ENCODE measurements at regions of chr14 and their contacts with region 1.

Region 1: DNA sequence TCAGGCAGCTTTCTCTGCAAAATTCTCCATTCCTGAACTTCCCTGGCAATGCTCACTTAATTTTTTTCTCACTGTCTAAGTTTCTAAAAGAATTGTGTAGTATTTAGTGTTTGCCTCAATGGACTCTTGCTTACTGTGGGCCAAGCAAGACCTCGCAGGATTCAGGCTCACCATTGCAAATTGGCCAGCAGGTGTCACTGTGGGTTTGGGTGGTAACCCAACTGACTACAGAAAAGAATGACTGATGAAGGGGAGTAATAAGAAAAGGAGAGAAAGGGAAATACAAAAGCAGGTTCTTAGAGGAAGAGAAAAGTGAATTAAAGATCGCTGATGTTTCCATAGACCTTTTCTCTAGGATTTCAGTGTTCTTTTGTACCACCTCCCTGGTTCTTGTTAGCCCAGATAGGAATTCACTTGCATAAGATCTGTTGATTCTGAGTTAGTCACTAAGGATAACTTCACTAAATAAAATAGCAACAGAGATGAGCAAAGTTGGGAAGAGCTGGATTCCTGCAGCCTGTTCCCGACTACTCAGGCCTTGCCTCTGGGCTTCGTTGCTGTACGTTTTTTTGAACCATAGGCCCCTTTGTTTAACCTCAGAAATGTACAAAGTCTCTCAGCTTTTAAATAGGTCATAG is 386.5 kb upstream of the DDHD1 start:
- DNase-seq: peak; percentile 67 to 78 (median 72)
- ATAC-seq: peak; percentile 67 to 92 (median 81)
- H3K4me3 ChIP-seq: no peak overlapping the region
- H3K27ac ChIP-seq: peak overlapping the region in 5 of 12 donors; percentile 15 to 56 (median 34)
- H3K4me1 ChIP-seq: peaks cover 0 to 42% (median 7%) of the 10 kb centered on the region in 12 donors
- H3K27me3 ChIP-seq: no peaks in the 10 kb centered on the region
- CTCF ChIP-seq: peak; percentile 75 to 95 (median 89)
- POLR2A ChIP-seq: no peak

Region 2: GRCh38 chr14:53432378-53432802 is 107.2 kb before region 1 on chr14:
- intact Hi-C with region 1: loop called in 2 of 10 experiments (anchors 10 kb)
- DNase-seq: no peak
- ATAC-seq: peak in 3 of 4 donors; percentile 47 to 61 (median 54)
- H3K4me3 ChIP-seq: no peak overlapping the region
- H3K27ac ChIP-seq: no peak overlapping the region
- H3K4me1 ChIP-seq: no peaks in the 10 kb centered on the region
- H3K27me3 ChIP-seq: no peaks in the 10 kb centered on the region
- CTCF ChIP-seq: peak; percentile 12 to 62 (median 49)
- POLR2A ChIP-seq: no peak

Region 3: DNA sequence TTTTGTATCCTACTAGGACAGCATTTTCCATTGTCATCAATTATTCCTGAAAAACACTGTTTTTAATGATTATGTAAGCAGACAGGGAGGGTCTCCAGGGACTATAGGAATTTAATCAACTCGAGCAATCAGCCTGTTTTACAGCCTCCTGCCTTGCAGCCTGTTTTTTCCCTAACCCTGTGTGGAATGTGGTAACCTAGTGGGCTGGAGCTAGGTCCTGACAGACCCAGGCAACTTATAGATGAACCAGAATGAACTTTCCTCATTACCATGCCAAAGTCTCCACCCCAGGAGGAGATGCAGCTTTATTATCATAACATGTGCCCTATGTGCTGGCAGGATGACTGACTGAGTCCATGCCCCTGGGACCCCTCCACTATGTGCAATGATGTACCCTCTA is 41.9 kb after region 1 on chr14:
- intact Hi-C with region 1: no loop called
- DNase-seq: no peak
- ATAC-seq: no peak
- H3K4me3 ChIP-seq: no peak overlapping the region
- H3K27ac ChIP-seq: no peak overlapping the region
- H3K4me1 ChIP-seq: no peaks in the 10 kb centered on the region
- H3K27me3 ChIP-seq: peaks cover 0 to 4% (median 0%) of the 10 kb centered on the region in 9 donors
- CTCF ChIP-seq: no peak
- POLR2A ChIP-seq: no peak

Region 4: GRCh38 chr14:53751650-53752049 is 212.0 kb after region 1 on chr14:
- intact Hi-C with region 1: no loop called
- DNase-seq: peak in 3 of 5 donors; percentile 13 to 49 (median 19)
- ATAC-seq: peak in 1 of 4 donors; percentile 73
- H3K4me3 ChIP-seq: no peak overlapping the region
- H3K27ac ChIP-seq: no peak overlapping the region
- H3K4me1 ChIP-seq: no peaks in the 10 kb centered on the region
- H3K27me3 ChIP-seq: no peaks in the 10 kb centered on the region
- CTCF ChIP-seq: no peak
- POLR2A ChIP-seq: no peak

Region 5: GRCh38 chr14:53963320-53964227 is 424.0 kb after region 1 on chr14:
- intact Hi-C with region 1: loop called in 4 of 10 experiments (anchors 10 kb)
- DNase-seq: peak in 4 of 5 donors; percentile 23 to 65 (median 38)
- ATAC-seq: peak; percentile 37 to 90 (median 84)
- H3K4me3 ChIP-seq: peak overlapping the region; percentile 1 to 61 (median 42)
- H3K27ac ChIP-seq: peak overlapping the region in 1 of 12 donors; percentile 7
- H3K4me1 ChIP-seq: peaks cover 0 to 12% (median 8%) of the 10 kb centered on the region in 12 donors
- H3K27me3 ChIP-seq: peaks cover 0 to 38% (median 7%) of the 10 kb centered on the region in 9 donors
- CTCF ChIP-seq: peak in 11 of 12 donors; percentile 10 to 60 (median 39)
- POLR2A ChIP-seq: no peak

Region 6: GRCh38 chr14:54175298-54175942 is 635.8 kb after region 1 on chr14:
- intact Hi-C with region 1: loop called (anchors 1 to 2 kb)
- DNase-seq: peak in 4 of 5 donors; percentile 31 to 61 (median 46)
- ATAC-seq: peak in 3 of 4 donors; percentile 50 to 62 (median 58)
- H3K4me3 ChIP-seq: no peak overlapping the region
- H3K27ac ChIP-seq: peak overlapping the region in 4 of 12 donors; percentile 3 to 64 (median 36)
- H3K4me1 ChIP-seq: peaks cover 0 to 46% (median 21%) of the 10 kb centered on the region in 12 donors
- H3K27me3 ChIP-seq: peaks cover 0 to 3% (median 0%) of the 10 kb centered on the region in 9 donors
- CTCF ChIP-seq: peak; percentile 75 to 92 (median 86)
- POLR2A ChIP-seq: no peak

Region 7: DNA sequence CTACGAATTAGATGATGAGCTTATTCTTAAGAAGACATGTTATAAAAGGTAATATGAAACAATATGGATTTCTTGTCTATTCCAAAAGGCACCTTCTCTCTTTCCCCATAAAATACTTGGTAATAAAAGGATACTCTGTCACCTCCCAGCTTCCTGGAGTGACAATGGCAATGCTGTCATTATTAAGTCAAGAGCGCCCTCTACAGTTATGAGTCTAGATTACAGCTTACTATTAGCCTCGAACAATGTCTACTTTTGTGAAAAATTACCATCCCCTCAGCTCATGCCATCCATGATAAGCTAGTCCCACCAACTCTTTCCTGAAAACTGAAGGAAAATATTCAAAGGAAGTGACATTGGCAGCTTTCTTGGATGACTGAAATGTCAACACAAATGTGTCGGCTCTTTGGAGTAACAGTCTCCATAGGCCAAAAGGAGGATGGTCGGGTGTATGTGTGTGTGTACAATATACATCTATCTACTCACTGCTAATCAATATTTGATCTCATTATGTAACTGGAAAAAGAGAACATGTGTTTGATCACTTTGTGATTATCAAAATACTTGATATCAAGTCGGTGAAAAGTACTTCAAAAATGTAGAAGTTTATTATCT is 808.5 kb after region 1 on chr14:
- intact Hi-C with region 1: loop called (anchors 1 to 5 kb)
- DNase-seq: no peak
- ATAC-seq: peak in 2 of 4 donors; percentile 34 to 51
- H3K4me3 ChIP-seq: no peak overlapping the region
- H3K27ac ChIP-seq: peak overlapping the region in 8 of 12 donors; percentile 37 to 81 (median 68)
- H3K4me1 ChIP-seq: peaks cover 0 to 39% (median 13%) of the 10 kb centered on the region in 12 donors
- H3K27me3 ChIP-seq: no peaks in the 10 kb centered on the region
- CTCF ChIP-seq: peak; percentile 59 to 82 (median 71)
- POLR2A ChIP-seq: no peak